A549 (cell line): ENCODE measurements at regions of chr6 and their contacts with region 1.

Region 1: DNA sequence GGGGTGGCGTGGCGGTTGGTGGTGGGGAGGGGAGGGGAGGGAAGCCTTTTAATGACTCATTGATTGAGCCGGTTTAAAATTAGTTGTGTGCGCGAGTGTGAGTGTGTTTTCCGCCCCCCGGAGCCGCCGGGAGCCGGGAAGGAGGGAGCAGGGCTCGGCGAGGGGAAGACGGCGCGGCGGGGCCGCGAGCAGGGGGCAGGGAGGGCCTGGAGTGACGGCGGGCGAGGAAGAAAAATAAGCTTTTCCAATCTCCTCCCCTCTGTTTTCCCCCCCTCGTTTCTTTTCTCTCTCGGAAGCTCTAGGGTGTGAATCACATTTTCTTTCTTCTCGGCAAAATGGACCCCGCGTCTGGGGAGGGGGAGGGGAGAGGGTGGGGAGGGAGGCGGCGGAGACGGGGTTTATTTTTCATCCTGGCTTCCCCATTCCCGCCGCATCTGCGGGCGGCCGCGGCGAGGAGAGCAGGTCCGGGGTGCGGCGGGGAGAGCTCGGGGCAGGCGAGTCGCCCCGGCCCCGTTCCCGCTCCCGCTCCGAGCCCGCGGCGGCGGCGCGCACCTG is 847 bp downstream of the BICRAL start:
- DNase-seq: peak; percentile 69 to 82
- ATAC-seq: peak; percentile 74 to 78
- H3K4me3 ChIP-seq: peak overlapping the region; percentile 70
- H3K27ac ChIP-seq: peak overlapping the region; percentile 100
- H3K4me1 ChIP-seq: peaks cover 8% of the 10 kb centered on the region; the same call in 2 of the 3 replicates
- CTCF ChIP-seq: no peak
- EP300 ChIP-seq: no peak; a peak in 1 of 5 replicates
- POLR2A ChIP-seq: peak; percentile 22
- RAD21 ChIP-seq: no peak; a peak in 1 of 5 replicates

Region 2: GRCh38 chr6:42661540-42662153 is 121.1 kb before region 1 on chr6:
- CTCF ChIA-PET with region 1: no interaction called
- POLR2A ChIA-PET with region 1: interaction called, 12 read pairs
- DNase-seq: peak; percentile 18 to 60
- ATAC-seq: peak; percentile 62 to 81; a peak in 4 of 6 replicates
- H3K4me3 ChIP-seq: no peak overlapping the region
- H3K27ac ChIP-seq: no peak overlapping the region
- H3K4me1 ChIP-seq: no peaks in the 10 kb centered on the region
- CTCF ChIP-seq: peak; percentile 80
- EP300 ChIP-seq: no peak
- POLR2A ChIP-seq: no peak
- RAD21 ChIP-seq: peak; percentile 81 to 83

Region 3: DNA sequence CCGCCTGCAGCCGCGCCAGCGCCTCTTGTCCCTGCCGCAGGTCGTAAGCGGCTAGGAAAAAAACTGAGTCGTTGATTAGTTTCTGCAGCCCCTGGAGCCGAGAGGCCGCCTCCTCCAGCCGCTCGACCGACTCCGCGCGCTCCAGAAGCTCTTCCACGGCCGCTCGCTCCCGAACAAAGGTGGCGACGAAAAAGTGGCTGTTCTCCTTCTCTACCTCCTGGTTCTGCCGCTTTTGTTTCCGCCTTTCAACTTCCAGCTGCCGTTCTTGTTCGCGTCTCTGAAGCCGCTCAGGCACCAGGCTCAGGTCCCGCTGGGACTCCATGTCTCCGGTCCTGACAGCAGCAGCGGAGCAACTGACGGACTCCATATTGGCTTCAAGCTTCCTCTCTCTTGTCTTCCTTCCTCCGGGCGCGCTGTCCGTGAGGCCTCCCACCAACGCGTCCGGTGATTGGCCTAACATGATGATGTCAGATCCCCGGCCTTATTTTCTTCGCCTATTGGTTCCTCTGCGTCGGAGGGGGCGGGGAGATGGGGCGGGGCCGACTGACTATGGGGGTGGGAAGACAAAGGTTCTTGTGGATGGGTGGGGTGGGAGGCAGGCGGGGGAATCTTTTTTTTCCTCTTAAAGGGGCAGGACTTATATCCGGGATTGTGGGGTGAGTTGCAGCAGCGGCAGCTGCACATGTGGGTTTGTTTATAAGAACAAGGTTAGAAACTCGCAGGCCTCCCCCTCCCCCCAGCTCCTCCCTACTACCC is 36.8 kb before region 1 on chr6 and contains the start of gene TBCC:
- CTCF ChIA-PET with region 1: interaction called, 3 read pairs
- POLR2A ChIA-PET with region 1: interaction called, 154 read pairs
- DNase-seq: peak; percentile 98
- ATAC-seq: peak; percentile 82 to 88
- H3K4me3 ChIP-seq: peak within 1 kb of the TSS; percentile 73
- H3K27ac ChIP-seq: peak within 1 kb of the TSS; percentile 94 to 98
- H3K4me1 ChIP-seq: peaks cover 18% of the 10 kb centered on the region
- CTCF ChIP-seq: no peak
- EP300 ChIP-seq: no peak
- POLR2A ChIP-seq: peak; percentile 93
- RAD21 ChIP-seq: no peak
- polyA plus RNA-seq, gene TBCC: 10.2 and 10.3 TPM in 2 replicates

Region 4: DNA sequence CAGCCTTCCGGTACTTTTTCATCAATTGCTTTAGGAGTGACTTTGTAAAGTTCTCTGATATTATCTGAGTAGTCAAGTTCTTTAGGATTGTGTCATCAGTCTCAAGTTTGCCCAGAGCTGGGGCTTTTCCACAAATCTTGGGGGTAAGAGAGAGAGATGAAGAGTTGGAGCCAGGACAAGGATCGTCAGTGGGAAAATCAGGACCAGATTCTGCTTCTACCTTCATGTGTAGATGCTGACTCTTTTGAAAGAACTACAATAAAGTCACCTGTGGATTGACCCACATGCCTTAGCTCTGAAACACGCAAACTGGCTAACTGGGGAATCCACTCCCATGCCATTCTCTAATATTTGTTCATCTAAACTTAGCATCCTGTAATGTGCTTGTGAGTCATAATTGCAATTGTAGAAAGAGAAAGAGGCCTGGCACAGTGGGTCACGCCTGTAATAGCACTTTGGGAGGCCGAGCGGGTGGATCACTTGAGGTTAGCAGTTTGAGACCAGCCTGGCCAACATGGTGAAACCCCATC is 16.5 kb before region 1 on chr6:
- CTCF ChIA-PET with region 1: no interaction called
- POLR2A ChIA-PET with region 1: interaction called, 38 read pairs
- DNase-seq: peak in 1 of 2 experiments; percentile 50
- ATAC-seq: peak; percentile 76 to 78; a peak in 5 of 6 replicates
- H3K4me3 ChIP-seq: no peak overlapping the region
- H3K27ac ChIP-seq: peak overlapping the region; percentile 14 to 62; a peak in 1 of 6 replicates
- H3K4me1 ChIP-seq: peaks cover 15% of the 10 kb centered on the region
- CTCF ChIP-seq: no peak
- EP300 ChIP-seq: no peak
- POLR2A ChIP-seq: no peak
- RAD21 ChIP-seq: no peak

Region 5: DNA sequence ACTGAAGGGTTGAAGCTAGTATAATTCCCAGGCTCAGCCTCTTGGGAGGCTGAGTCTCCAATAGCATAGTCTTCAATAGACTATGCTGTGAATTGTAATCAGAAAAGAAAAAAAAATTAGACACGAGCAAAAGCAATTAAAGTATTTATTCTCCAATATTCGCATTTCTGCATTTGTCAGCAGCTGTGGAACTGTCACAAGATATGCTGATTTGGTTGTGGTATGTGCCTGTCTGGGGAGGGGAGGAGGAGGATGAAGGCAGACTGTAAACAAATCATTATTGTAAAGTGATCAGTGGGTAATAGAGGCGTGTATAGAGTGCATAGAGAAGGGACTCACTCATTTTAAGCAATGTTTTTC is 11.0 kb before region 1 on chr6:
- CTCF ChIA-PET with region 1: no interaction called
- POLR2A ChIA-PET with region 1: interaction called, 38 read pairs
- DNase-seq: no peak
- ATAC-seq: no peak
- H3K4me3 ChIP-seq: no peak overlapping the region
- H3K27ac ChIP-seq: no peak overlapping the region
- H3K4me1 ChIP-seq: peaks cover 3% of the 10 kb centered on the region; the same call in 2 of the 3 replicates
- CTCF ChIP-seq: no peak
- EP300 ChIP-seq: no peak
- POLR2A ChIP-seq: no peak
- RAD21 ChIP-seq: no peak

Region 6: DNA sequence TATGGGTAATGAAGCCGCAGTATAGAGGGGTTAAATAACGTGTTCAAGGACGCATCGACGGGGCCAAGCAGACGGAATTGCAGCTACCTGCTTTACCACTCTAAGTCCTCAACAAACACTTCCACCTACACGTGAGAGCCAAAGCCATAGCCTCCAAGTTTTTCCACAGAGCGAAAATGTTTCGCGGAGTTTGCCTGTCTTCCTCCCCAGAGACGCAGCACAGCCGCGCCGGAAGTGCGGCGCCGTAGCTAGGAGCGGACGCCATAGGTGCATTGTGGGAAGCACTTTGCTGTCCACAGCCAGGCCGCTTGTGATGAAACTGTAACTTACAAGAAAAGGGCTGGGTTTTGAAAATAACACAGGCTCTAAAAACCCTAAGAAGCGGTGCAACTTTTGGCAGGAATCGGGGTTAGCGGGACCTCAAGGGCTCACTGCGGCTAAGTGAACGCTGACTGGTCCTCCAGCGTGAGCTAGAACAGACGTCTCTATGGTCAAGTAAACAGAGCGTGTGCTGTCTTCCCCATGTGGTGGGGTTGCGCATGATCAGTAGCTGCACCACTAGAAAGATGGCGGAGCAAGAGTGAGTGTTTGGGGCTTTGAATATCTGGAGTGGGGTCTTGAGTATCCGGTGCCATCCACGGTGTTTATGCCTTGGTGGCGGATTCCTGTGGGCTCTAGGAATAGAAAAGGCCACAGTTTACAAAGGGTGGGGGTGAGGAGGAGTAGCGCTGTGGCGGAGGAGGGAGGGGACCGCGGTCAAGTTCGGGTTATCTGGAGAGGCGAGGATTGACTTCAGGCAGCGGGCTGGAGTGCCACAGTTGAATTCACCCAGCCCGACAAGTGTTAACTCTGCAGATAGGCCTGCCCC is 96.9 kb after region 1 on chr6 and contains the start of gene RPL7L1:
- CTCF ChIA-PET with region 1: no interaction called
- POLR2A ChIA-PET with region 1: interaction called, 20 read pairs
- DNase-seq: peak; percentile 50 to 90
- ATAC-seq: peak; percentile 97 to 98
- H3K4me3 ChIP-seq: peak within 1 kb of the TSS; percentile 85
- H3K27ac ChIP-seq: peak within 1 kb of the TSS; percentile 97 to 99
- H3K4me1 ChIP-seq: peaks cover 21% of the 10 kb centered on the region; the same call in 2 of the 3 replicates
- CTCF ChIP-seq: no peak
- EP300 ChIP-seq: no peak
- POLR2A ChIP-seq: peak; percentile 58
- RAD21 ChIP-seq: no peak
- polyA plus RNA-seq, gene RPL7L1: 46.4 and 65.2 TPM in 2 replicates